Sciatic nerve (tissue), 2 donors: ENCODE measurements at regions of chr14 and their contacts with region 1.

Region 1: GRCh38 chr14:89618811-89619551 is 201.9 kb upstream of the FOXN3 start:
- DNase-seq: peak; percentile 75
- ATAC-seq: peak; percentile 83

Region 2: GRCh38 chr14:89033756-89034155 is 585.2 kb before region 1 on chr14:
- intact Hi-C with region 1: loop called (anchors 5 kb)
- DNase-seq: no peak
- ATAC-seq: no peak

Region 3: GRCh38 chr14:89146274-89146673 is 472.7 kb before region 1 on chr14:
- intact Hi-C with region 1: no loop called
- DNase-seq: no peak
- ATAC-seq: no peak

Region 4: GRCh38 chr14:89660166-89660565 is 41.2 kb after region 1 on chr14:
- intact Hi-C with region 1: no loop called
- DNase-seq: no peak
- ATAC-seq: peak; percentile 91